RWPE1 (cell line): ENCODE measurements at regions of chr2 and their contacts with region 1.

Region 1: GRCh38 chr2:46489423-46490174 is 10.2 kb downstream of the TMEM247 start:
- DNase-seq: no peak
- H3K27ac ChIP-seq: no peak overlapping the region
- CTCF ChIP-seq: no peak

Region 2: GRCh38 chr2:46470114-46470628 is 19.4 kb before region 1 on chr2:
- CTCF ChIA-PET with region 1: interaction called, 10 read pairs
- POLR2A ChIA-PET with region 1: no interaction called
- DNase-seq: no peak
- H3K27ac ChIP-seq: no peak overlapping the region
- CTCF ChIP-seq: no peak